Activated T-helper 1 cell treated with anti-CD3 and anti-CD28 coated beads, Interleukin-12 subunit alpha, Interleukin-12 subunit beta, Interleukin-2, Interleukin-4 antibody, amounts not matched to agents 30 ng/mL and 10 ng/mL and 1 ng/mL, durations not matched to agents 14 hours and 24 hours and 36 hours (primary cell): ENCODE measurements at regions of chr17 and their contacts with region 1.

Region 1: GRCh38 chr17:63621766-63622519 is at the start of gene MAP3K3:
- DNase-seq: peak; percentile 97
- H3K4me3 Mint-ChIP-seq: peak within 1 kb of the TSS; percentile 100
- H3K27ac Mint-ChIP-seq: peak within 1 kb of the TSS; percentile 95
- H3K4me1 Mint-ChIP-seq: peaks cover 44% of the 10 kb centered on the region
- H3K27me3 Mint-ChIP-seq: peaks cover 7% of the 10 kb centered on the region
- total RNA-seq, gene MAP3K3: 27.9 and 29.6 TPM in 2 replicates

Region 2: DNA sequence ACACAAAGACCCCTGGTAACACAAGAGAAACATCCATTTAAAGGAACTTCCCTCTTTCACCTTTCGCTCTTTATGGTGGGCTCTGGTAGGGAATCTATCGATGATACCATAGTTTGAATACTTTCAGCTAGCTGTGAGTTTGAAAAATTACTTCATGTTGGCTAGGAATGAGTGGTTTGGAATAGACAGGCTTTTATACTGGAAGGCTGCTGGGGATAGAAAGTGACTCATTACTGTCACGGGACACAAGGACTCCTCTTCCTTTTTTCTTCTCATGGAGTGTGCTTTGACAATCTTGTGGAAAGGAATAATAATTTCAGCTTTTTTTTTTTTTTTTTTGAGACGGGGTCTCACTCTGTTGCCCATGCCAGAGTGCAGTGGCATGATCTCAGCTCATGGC is 252.7 kb before region 1 on chr17:
- intact Hi-C with region 1: no loop called
- DNase-seq: no peak
- H3K4me3 Mint-ChIP-seq: no peak overlapping the region
- H3K27ac Mint-ChIP-seq: no peak overlapping the region
- H3K4me1 Mint-ChIP-seq: no peaks in the 10 kb centered on the region
- H3K27me3 Mint-ChIP-seq: no peaks in the 10 kb centered on the region

Region 3: GRCh38 chr17:63611354-63611753 is 10.6 kb before region 1 on chr17:
- intact Hi-C with region 1: loop called (anchors 1 kb)
- DNase-seq: peak; percentile 11
- H3K4me3 Mint-ChIP-seq: peak overlapping the region; percentile 77
- H3K27ac Mint-ChIP-seq: peak overlapping the region; percentile 98
- H3K4me1 Mint-ChIP-seq: peaks cover 30% of the 10 kb centered on the region
- H3K27me3 Mint-ChIP-seq: no peaks in the 10 kb centered on the region

Region 4: GRCh38 chr17:63649813-63650212 is 27.9 kb after region 1 on chr17:
- intact Hi-C with region 1: no loop called
- DNase-seq: no peak
- H3K4me3 Mint-ChIP-seq: no peak overlapping the region
- H3K27ac Mint-ChIP-seq: no peak overlapping the region
- H3K4me1 Mint-ChIP-seq: peaks cover 19% of the 10 kb centered on the region
- H3K27me3 Mint-ChIP-seq: no peaks in the 10 kb centered on the region

Region 5: GRCh38 chr17:63741221-63742049 is 119.5 kb after region 1 on chr17 and contains the start of gene STRADA:
- intact Hi-C with region 1: loop called (anchors 1 kb)
- DNase-seq: peak; percentile 99
- H3K4me3 Mint-ChIP-seq: peak within 1 kb of the TSS; percentile 98
- H3K27ac Mint-ChIP-seq: peak within 1 kb of the TSS; percentile 97
- H3K4me1 Mint-ChIP-seq: peaks cover 25% of the 10 kb centered on the region
- H3K27me3 Mint-ChIP-seq: no peaks in the 10 kb centered on the region
- total RNA-seq, gene STRADA: 59.1 and 59.4 TPM in 2 replicates

Region 6: GRCh38 chr17:63827002-63827771 is 205.2 kb after region 1 on chr17 and contains the starts of genes FTSJ3 and PSMC5:
- intact Hi-C with region 1: loop called (anchors 5 kb)
- DNase-seq: peak; percentile 94
- H3K4me3 Mint-ChIP-seq: peak within 1 kb of the TSS; percentile 96
- H3K27ac Mint-ChIP-seq: peak within 1 kb of the TSS; percentile 98
- H3K4me1 Mint-ChIP-seq: peaks cover 71% of the 10 kb centered on the region
- H3K27me3 Mint-ChIP-seq: no peaks in the 10 kb centered on the region
- total RNA-seq, gene FTSJ3: 95.6 and 100 TPM in 2 replicates
- total RNA-seq, gene PSMC5: 185 and 195 TPM in 2 replicates

Region 7: DNA sequence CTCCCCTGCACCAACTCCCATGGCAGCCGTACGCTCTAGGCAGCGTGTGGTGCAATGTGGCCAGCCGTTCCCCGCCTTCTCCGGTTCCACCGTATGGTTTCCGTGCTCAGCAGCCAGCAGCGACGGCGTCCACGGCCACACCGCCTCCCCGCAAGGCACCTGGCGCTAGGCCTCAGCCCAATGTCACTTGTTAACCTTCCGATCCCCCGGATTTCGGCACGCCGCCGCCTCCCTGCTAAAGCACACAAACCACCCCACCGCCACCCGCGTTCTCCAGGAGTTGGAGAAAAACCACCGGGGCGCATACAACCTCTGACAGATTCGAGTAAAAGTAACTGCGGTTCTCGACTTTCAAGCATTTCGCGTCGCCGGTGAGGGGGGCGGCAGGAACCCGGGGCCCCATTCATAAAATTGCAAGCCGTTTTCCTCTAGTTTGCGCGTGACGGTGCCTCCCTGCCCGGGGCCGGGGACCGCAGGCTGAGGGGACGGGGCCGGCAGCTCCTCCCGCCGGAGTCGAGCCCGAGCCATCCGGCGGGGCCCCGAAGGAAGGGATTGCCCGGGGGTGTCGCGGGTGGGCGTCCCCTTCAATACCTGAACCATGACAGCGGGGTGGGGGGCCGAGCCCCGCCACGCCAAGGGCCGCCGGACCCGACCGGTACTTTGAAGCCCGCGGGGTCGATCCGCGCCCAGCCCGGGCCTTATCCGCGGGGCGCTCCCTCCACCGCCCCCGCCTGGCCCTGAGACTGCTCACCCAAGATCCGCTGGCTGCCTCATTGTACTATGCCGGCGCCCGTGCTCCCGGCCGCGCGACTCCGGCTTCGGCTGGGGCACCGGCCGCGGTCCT is 640.7 kb after region 1 on chr17 and contains the start of gene TEX2:
- intact Hi-C with region 1: loop called (anchors 5 kb)
- DNase-seq: peak; percentile 57
- H3K4me3 Mint-ChIP-seq: peak within 1 kb of the TSS; percentile 94
- H3K27ac Mint-ChIP-seq: peak within 1 kb of the TSS; percentile 98
- H3K4me1 Mint-ChIP-seq: peaks cover 37% of the 10 kb centered on the region
- H3K27me3 Mint-ChIP-seq: peaks cover 21% of the 10 kb centered on the region
- total RNA-seq, gene TEX2: 20.6 and 21.9 TPM in 2 replicates